GM12878 (cell line): ENCODE measurements at regions of chr1 and their contacts with region 1.

Region 1: GRCh38 chr1:183655562-183656075 is 2.5 kb upstream of the APOBEC4 start:
- DNase-seq: peak; percentile 61
- ATAC-seq: peak; percentile 66
- H3K4me3 ChIP-seq: no peak overlapping the region
- H3K27ac ChIP-seq: no peak overlapping the region
- H3K4me1 ChIP-seq: peaks cover 31% of the 10 kb centered on the region
- H3K27me3 ChIP-seq: no peaks in the 10 kb centered on the region
- CTCF ChIP-seq: peak; percentile 80 to 88 (median 80); a peak in 5 of 6 replicates
- EP300 ChIP-seq: no peak
- POLR2A ChIP-seq: no peak
- RAD21 ChIP-seq: peak; percentile 92

Region 2: GRCh38 chr1:183149273-183149672 is 506.3 kb before region 1 on chr1:
- CTCF ChIA-PET with region 1: no interaction called
- POLR2A ChIA-PET with region 1: no interaction called
- RAD21 ChIA-PET with region 1: no interaction called
- SMC1A ChIA-PET with region 1: no interaction called
- in situ Hi-C with region 1: no loop called
- intact Hi-C with region 1: no loop called
- DNase-seq: no peak
- ATAC-seq: no peak
- H3K4me3 ChIP-seq: no peak overlapping the region
- H3K27ac ChIP-seq: no peak overlapping the region
- H3K4me1 ChIP-seq: no peaks in the 10 kb centered on the region
- H3K27me3 ChIP-seq: no peaks in the 10 kb centered on the region
- CTCF ChIP-seq: no peak
- EP300 ChIP-seq: no peak
- POLR2A ChIP-seq: no peak
- RAD21 ChIP-seq: no peak

Region 3: GRCh38 chr1:183622884-183623785 is 32.5 kb before region 1 on chr1:
- CTCF ChIA-PET with region 1: interaction called, 11 read pairs
- POLR2A ChIA-PET with region 1: no interaction called
- RAD21 ChIA-PET with region 1: interaction called, 10 read pairs
- SMC1A ChIA-PET with region 1: interaction called, 8 read pairs
- in situ Hi-C with region 1: no loop called
- intact Hi-C with region 1: no loop called
- DNase-seq: no peak
- ATAC-seq: peak; percentile 94
- H3K4me3 ChIP-seq: no peak overlapping the region
- H3K27ac ChIP-seq: no peak overlapping the region
- H3K4me1 ChIP-seq: no peaks in the 10 kb centered on the region; the same call in 1 of the 2 replicates
- H3K27me3 ChIP-seq: no peaks in the 10 kb centered on the region
- CTCF ChIP-seq: peak; percentile 73 to 77 (median 77); a peak in 5 of 6 replicates
- EP300 ChIP-seq: no peak
- POLR2A ChIP-seq: peak; percentile 25; the same call in 1 of the 2 replicates
- RAD21 ChIP-seq: peak; percentile 86

Region 4: GRCh38 chr1:183670178-183670577 is 14.6 kb after region 1 on chr1:
- CTCF ChIA-PET with region 1: interaction called, 15 read pairs
- POLR2A ChIA-PET with region 1: no interaction called
- RAD21 ChIA-PET with region 1: interaction called, 8 read pairs
- SMC1A ChIA-PET with region 1: interaction called, 34 read pairs
- in situ Hi-C with region 1: no loop called
- intact Hi-C with region 1: no loop called
- DNase-seq: no peak
- ATAC-seq: no peak
- H3K4me3 ChIP-seq: no peak overlapping the region
- H3K27ac ChIP-seq: no peak overlapping the region
- H3K4me1 ChIP-seq: no peaks in the 10 kb centered on the region
- H3K27me3 ChIP-seq: no peaks in the 10 kb centered on the region
- CTCF ChIP-seq: no peak
- EP300 ChIP-seq: no peak
- POLR2A ChIP-seq: no peak
- RAD21 ChIP-seq: no peak

Region 5: GRCh38 chr1:183694066-183694465 is 38.4 kb after region 1 on chr1:
- CTCF ChIA-PET with region 1: interaction called, 27 read pairs
- POLR2A ChIA-PET with region 1: no interaction called
- RAD21 ChIA-PET with region 1: interaction called, 10 read pairs
- SMC1A ChIA-PET with region 1: interaction called, 10 read pairs
- in situ Hi-C with region 1: no loop called
- intact Hi-C with region 1: no loop called
- DNase-seq: no peak
- ATAC-seq: no peak
- H3K4me3 ChIP-seq: no peak overlapping the region
- H3K27ac ChIP-seq: no peak overlapping the region
- H3K4me1 ChIP-seq: peaks cover 11% of the 10 kb centered on the region; the same call in 1 of the 2 replicates
- H3K27me3 ChIP-seq: no peaks in the 10 kb centered on the region
- CTCF ChIP-seq: no peak
- EP300 ChIP-seq: no peak
- POLR2A ChIP-seq: no peak
- RAD21 ChIP-seq: no peak

Region 6: GRCh38 chr1:183896466-183897048 is 240.9 kb after region 1 on chr1:
- CTCF ChIA-PET with region 1: interaction called, 26 read pairs
- POLR2A ChIA-PET with region 1: interaction called, 4 read pairs
- RAD21 ChIA-PET with region 1: interaction called, 19 read pairs
- SMC1A ChIA-PET with region 1: interaction called, 21 read pairs
- in situ Hi-C with region 1: no loop called
- intact Hi-C with region 1: no loop called
- DNase-seq: no peak
- ATAC-seq: peak; percentile 27
- H3K4me3 ChIP-seq: no peak overlapping the region; the same call in 1 of the 2 replicates
- H3K27ac ChIP-seq: peak overlapping the region; percentile 97
- H3K4me1 ChIP-seq: peaks cover 80% of the 10 kb centered on the region
- H3K27me3 ChIP-seq: no peaks in the 10 kb centered on the region
- CTCF ChIP-seq: no peak
- EP300 ChIP-seq: no peak
- POLR2A ChIP-seq: no peak
- RAD21 ChIP-seq: no peak

Region 7: DNA sequence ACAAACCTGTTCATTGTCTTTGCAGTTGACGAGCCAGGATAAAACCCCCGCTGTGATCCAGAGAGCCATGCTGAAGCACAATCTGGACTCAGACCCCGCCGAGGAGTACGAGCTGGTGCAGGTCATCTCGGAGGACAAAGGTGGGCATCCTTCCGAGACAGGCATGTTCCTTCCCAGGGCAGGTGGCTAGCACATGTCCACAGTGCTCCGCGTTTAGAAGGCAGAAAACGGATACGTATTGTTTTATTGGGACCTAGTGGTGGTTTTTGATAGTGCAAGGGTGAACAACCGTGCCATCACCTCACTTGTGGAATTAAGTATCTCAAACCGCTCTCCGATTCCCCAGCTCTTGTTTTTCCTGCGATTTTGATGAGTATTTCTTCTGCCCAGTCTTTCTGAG is 266.6 kb after region 1 on chr1:
- CTCF ChIA-PET with region 1: interaction called, 360 read pairs
- POLR2A ChIA-PET with region 1: interaction called, 39 read pairs
- RAD21 ChIA-PET with region 1: interaction called, 299 read pairs
- SMC1A ChIA-PET with region 1: interaction called, 331 read pairs
- in situ Hi-C with region 1: no loop called
- intact Hi-C with region 1: no loop called
- DNase-seq: no peak
- ATAC-seq: no peak
- H3K4me3 ChIP-seq: no peak overlapping the region
- H3K27ac ChIP-seq: no peak overlapping the region
- H3K4me1 ChIP-seq: no peaks in the 10 kb centered on the region
- H3K27me3 ChIP-seq: no peaks in the 10 kb centered on the region
- CTCF ChIP-seq: no peak
- EP300 ChIP-seq: no peak
- POLR2A ChIP-seq: no peak
- RAD21 ChIP-seq: no peak